Natural killer cell (primary cell): ENCODE measurements at regions of chr20 and their contacts with region 1.

Region 1: DNA sequence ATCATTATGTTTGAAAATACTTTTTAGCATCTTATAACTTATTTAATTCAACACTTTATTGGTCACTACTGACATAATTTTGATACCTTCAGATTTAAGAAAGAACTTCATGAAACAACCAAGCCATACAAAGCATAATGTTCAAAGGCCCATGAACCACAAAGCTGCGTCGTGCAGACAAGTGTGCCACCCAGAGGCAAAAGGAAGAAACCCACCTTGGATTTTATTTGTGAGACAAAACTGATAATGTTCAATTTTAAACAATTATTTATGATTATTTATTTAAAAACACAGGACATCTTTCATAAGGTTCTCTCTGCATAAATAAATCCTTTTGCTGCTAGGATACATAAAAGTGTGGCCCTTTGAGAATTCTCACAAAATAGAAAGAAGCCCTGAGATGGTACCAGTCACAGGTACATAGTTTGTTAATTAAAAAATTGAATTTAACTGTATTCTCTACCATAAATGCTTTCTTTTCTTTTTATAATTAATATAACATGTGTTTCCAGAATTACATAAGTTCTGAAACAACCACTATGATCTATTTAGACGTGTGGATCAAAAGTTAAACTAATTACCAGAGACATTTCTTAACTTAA is 143.7 kb downstream of the RALGAPA2 start:
- DNase-seq: peak in 1 of 2 donors; percentile 56
- ATAC-seq: peak in 2 of 3 donors; percentile 40 to 62
- H3K4me3 ChIP-seq: no peak overlapping the region
- H3K4me3 Mint-ChIP-seq: no peak overlapping the region
- H3K27ac ChIP-seq: no peak overlapping the region
- H3K27ac Mint-ChIP-seq: no peak overlapping the region
- H3K4me1 ChIP-seq: no peaks in the 10 kb centered on the region
- H3K4me1 Mint-ChIP-seq: peaks cover 4 to 8% of the 10 kb centered on the region in 2 donors
- H3K27me3 ChIP-seq: no peaks in the 10 kb centered on the region
- H3K27me3 Mint-ChIP-seq: no peaks in the 10 kb centered on the region
- CTCF ChIP-seq: peak; percentile 77

Region 2: GRCh38 chr20:19692685-19693119 is 876.0 kb before region 1 on chr20:
- intact Hi-C with region 1: loop called (anchors 10 kb)
- DNase-seq: peak; percentile 31 to 56
- ATAC-seq: peak in 1 of 3 donors; percentile 46
- H3K4me3 ChIP-seq: no peak overlapping the region
- H3K4me3 Mint-ChIP-seq: no peak overlapping the region
- H3K27ac ChIP-seq: no peak overlapping the region
- H3K27ac Mint-ChIP-seq: no peak overlapping the region
- H3K4me1 ChIP-seq: peaks cover 3% of the 10 kb centered on the region
- H3K4me1 Mint-ChIP-seq: peaks cover 0 to 7% of the 10 kb centered on the region in 2 donors
- H3K27me3 ChIP-seq: no peaks in the 10 kb centered on the region
- H3K27me3 Mint-ChIP-seq: peaks cover 13 to 14% of the 10 kb centered on the region in 2 donors
- CTCF ChIP-seq: peak; percentile 93